Activated T-helper 1 cell treated with anti-CD3 and anti-CD28 coated beads, Interleukin-12 subunit alpha, Interleukin-12 subunit beta, Interleukin-2, Interleukin-4 antibody, amounts not matched to agents 30 ng/mL and 10 ng/mL and 1 ng/mL, durations not matched to agents 14 hours and 24 hours and 36 hours (primary cell): ENCODE measurements at regions of chr19 and their contacts with region 1.

Region 1: DNA sequence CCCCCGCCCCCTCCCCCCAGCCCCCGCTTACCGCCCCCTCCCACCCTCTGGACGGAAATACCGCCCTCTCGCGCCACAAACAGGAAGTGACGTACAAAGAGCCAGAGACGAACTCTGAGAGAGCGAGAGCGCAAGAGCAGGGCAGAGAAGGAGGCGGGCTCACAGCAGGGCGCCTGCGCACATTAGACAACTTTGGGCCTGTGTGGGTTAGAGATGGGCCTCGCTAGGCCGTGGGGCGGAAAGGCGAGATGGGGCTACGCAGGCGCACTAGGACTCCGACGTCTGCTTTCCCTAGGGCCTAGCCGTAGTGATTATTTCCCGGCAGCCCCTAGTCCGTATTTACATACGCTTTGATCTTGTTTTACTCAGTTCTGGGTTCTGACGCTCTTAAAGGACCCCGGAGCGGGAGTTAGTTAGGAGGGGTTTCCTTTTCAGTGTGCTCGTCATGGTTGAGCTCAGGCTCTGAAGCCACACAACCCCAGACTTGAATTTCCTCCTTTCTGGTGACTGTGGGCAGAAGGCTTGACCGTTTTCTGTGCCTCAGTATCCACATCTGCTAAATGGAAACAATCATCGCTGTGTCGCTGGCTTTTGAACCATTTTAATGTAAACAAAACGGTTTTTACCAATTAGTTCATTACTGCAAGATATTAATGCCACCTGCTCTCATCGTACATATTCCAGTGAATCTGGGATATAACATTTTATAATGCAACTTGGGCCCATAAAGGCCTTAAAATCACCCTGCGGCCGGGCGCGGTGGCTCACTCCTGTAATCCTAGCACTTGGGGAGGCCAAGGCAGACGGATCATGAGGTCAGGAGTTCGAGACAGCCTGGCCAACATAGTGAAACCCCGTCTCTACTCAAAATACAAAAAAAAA is 449 bp upstream of the AKT2 start:
- DNase-seq: peak; percentile 98
- H3K4me3 Mint-ChIP-seq: peak overlapping the region; percentile 80
- H3K27ac Mint-ChIP-seq: peak overlapping the region; percentile 98
- H3K4me1 Mint-ChIP-seq: peaks cover 32% of the 10 kb centered on the region
- H3K27me3 Mint-ChIP-seq: no peaks in the 10 kb centered on the region

Region 2: GRCh38 chr19:39996811-39997594 is 288.6 kb before region 1 on chr19 and contains the start of gene ZNF546:
- intact Hi-C with region 1: loop called (anchors 1 kb)
- DNase-seq: peak; percentile 87
- H3K4me3 Mint-ChIP-seq: peak within 1 kb of the TSS; percentile 99
- H3K27ac Mint-ChIP-seq: peak within 1 kb of the TSS; percentile 100
- H3K4me1 Mint-ChIP-seq: peaks cover 41% of the 10 kb centered on the region
- H3K27me3 Mint-ChIP-seq: no peaks in the 10 kb centered on the region
- total RNA-seq, gene ZNF546: 6.1 and 7.1 TPM in 2 replicates

Region 3: DNA sequence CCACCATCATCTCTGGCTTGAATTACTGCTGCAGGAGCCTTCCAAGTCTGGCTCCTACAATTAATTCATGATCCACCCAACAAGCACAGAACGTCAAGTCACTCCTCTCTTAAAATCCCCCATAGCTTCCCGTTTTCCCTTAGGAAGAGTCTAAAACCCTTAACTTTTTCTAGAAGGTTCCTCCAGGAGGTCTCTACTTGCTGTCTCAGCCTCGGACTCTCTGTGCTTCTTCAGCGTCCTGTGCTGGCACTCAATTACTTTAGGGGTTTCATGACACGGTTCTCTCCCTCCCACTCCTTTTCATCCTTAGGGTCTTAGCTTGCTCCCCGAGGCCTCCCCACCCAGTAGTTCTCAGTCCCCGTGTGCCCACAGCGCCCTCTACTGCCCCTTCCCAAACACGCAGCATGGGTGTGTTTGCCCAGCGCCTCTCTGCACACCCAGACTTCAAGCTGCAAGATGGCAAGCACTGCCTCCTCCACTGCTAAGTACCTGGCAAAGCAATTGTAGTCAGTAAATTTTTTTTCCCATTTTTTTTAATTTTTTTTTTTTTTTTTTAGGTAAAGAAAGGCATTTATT is 120.1 kb before region 1 on chr19:
- intact Hi-C with region 1: no loop called
- DNase-seq: peak; percentile 38
- H3K4me3 Mint-ChIP-seq: no peak overlapping the region
- H3K27ac Mint-ChIP-seq: peak overlapping the region; percentile 15
- H3K4me1 Mint-ChIP-seq: no peaks in the 10 kb centered on the region
- H3K27me3 Mint-ChIP-seq: peaks cover 2% of the 10 kb centered on the region

Region 4: DNA sequence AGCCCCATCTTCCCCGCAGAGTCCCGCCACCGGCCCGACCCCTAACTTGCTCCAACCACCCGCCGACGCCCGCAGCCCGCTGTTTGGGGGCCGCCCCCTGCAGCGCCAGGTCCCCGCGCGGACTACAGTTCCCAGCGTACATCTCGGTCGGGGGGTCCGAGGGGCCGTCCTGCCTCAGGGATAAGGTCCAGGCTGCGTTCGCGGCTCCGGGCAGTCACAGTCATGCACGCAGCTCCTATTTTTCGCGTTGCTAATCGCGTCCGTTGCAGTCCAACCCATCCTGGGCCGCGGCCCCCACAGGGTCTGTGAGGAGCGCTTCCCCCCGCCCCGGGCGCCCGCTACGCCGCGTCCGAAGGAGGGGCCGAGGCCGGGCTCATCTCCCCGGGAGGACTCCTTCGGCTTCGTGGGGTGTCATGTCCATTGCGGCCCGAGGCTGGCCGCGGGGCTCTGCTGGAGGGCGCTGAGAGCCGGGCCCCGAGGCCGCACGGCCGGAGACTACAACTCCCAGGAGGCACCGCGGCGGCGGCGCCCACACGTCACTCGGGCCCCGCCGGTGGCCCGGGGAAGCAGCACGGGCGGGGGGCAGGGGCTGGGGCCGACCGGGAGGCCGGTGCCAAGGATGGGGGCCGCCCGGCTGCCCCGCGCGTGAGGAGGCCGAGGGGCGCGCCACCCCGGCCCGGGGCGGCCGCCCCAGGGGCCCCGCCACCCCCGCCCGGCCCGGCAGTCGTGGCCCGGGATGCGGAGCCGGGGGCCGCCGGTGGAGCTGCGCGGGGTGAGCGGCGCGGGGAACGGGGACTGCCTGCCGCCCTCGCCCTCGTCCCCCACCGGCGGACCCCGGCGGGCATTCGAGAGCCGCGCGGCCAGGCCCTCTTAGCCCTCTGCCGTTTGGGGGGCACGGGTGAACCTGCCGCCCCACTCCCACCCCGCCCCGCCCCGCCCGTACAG is 94.4 kb before region 1 on chr19 and contains the start of gene MAP3K10:
- intact Hi-C with region 1: loop called (anchors 1 kb)
- DNase-seq: peak; percentile 73
- H3K4me3 Mint-ChIP-seq: peak within 1 kb of the TSS; percentile 90
- H3K27ac Mint-ChIP-seq: peak within 1 kb of the TSS; percentile 93
- H3K4me1 Mint-ChIP-seq: peaks cover 34% of the 10 kb centered on the region
- H3K27me3 Mint-ChIP-seq: peaks cover 8% of the 10 kb centered on the region
- total RNA-seq, gene MAP3K10: 13.8 and 19.8 TPM in 2 replicates

Region 5: GRCh38 chr19:40403262-40403984 is 117.8 kb after region 1 on chr19:
- intact Hi-C with region 1: loop called (anchors 5 kb)
- DNase-seq: peak; percentile 80
- H3K4me3 Mint-ChIP-seq: peak overlapping the region; percentile 83
- H3K27ac Mint-ChIP-seq: peak overlapping the region; percentile 72
- H3K4me1 Mint-ChIP-seq: peaks cover 21% of the 10 kb centered on the region
- H3K27me3 Mint-ChIP-seq: peaks cover 7% of the 10 kb centered on the region

Region 6: GRCh38 chr19:40444192-40445028 is 158.8 kb after region 1 on chr19 and contains the start of gene SERTAD3:
- intact Hi-C with region 1: loop called (anchors 1 kb)
- DNase-seq: peak; percentile 97
- H3K4me3 Mint-ChIP-seq: peak within 1 kb of the TSS; percentile 97
- H3K27ac Mint-ChIP-seq: peak within 1 kb of the TSS; percentile 97
- H3K4me1 Mint-ChIP-seq: peaks cover 26% of the 10 kb centered on the region
- H3K27me3 Mint-ChIP-seq: no peaks in the 10 kb centered on the region
- total RNA-seq, gene SERTAD3: 6.4 and 10.0 TPM in 2 replicates

Region 7: DNA sequence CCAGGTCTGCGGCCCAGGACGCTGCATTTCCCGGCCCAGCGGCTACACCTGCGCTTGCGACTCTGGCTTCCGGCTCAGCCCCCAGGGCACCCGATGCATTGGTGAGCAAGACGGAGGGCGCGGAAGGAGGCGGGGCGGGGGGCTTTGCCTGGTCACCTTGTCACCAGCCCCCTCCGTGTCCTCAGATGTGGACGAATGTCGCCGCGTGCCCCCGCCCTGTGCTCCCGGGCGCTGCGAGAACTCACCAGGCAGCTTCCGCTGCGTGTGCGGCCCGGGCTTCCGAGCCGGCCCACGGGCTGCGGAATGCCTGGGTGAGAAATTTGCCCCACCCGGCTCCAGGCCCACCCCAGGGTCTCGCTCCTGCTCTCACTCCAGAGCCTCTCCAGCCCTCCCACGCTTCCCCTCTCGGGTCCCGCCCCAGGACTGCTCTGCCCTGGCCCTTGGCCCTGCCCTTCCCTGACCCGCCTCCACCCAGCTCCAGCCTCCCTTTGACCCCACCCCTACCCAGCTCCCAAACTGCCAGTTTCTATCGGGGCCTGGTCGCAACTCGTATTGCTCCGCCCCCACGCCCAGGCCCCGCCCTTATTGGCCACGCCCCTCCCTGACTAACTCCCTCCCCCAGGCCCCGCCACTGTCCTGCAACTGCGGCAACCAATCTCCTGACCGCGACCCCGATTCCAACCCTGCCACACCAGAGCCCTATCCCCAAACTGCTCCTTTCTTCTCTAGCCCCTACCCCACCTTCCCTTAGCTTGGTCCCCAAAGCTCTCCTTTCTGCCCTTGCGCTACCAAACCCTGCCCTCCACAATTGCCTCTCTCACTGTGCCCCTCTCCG is 324.2 kb after region 1 on chr19:
- intact Hi-C with region 1: loop called (anchors 5 kb)
- DNase-seq: peak; percentile 86
- H3K4me3 Mint-ChIP-seq: peak overlapping the region; percentile 81
- H3K27ac Mint-ChIP-seq: peak overlapping the region; percentile 86
- H3K4me1 Mint-ChIP-seq: peaks cover 44% of the 10 kb centered on the region
- H3K27me3 Mint-ChIP-seq: no peaks in the 10 kb centered on the region

Region 8: DNA sequence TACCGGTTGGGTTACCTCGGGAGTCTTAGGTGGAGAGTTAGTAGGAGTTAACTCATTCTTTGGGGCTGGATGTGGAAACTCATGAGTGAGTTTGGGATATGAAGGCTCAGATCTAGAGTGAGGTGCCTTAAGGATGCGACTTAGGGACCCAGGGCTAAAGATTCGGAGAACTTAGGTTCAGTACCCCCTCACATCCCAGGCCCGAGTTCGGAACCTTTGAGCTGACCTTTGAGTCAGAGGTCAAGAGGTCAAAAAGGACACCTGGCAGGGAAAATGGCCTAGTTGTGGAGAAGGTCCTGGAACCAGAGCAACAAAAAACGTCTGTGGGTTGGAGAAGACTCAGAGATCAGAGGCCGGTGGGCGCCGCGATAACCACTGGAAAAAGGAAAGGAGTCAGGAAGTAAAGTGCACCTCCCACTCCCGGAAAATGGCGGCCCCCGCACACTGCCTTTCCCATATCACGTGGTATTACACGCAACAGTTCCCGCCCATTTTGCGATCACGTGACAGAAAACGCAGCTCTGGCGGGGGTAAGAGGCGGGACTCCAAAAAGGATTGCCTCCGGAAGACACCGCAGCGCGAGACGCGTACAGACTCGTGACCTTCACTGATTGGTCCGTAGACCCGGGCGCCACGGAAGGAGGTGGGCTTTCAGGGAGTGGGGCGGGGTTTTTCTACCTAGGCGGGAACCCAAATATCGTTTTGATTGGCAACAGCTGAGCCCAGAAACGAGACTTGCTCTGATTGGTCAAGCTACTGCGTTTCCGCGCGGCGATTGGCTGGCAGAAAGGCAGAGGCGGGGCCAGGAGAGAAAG is 464.7 kb after region 1 on chr19 and contains the start of gene ACTMAP:
- intact Hi-C with region 1: loop called (anchors 10 kb)
- DNase-seq: peak; percentile 100
- H3K4me3 Mint-ChIP-seq: peak within 1 kb of the TSS; percentile 99
- H3K27ac Mint-ChIP-seq: peak within 1 kb of the TSS; percentile 99
- H3K4me1 Mint-ChIP-seq: peaks cover 27% of the 10 kb centered on the region
- H3K27me3 Mint-ChIP-seq: no peaks in the 10 kb centered on the region
- total RNA-seq, gene ACTMAP: 9.5 and 10.0 TPM in 2 replicates